Esophagus muscularis mucosa (tissue), 4 donors: ENCODE measurements at regions of chr17 and their contacts with region 1.

Region 1: GRCh38 chr17:28598799-28599310 is at the start of gene SPAG5:
- DNase-seq: peak; percentile 98
- H3K4me3 ChIP-seq: peak within 1 kb of the TSS; percentile 63 to 73 (median 66)
- H3K27ac ChIP-seq: peak within 1 kb of the TSS; percentile 94 to 95 (median 94)
- H3K4me1 ChIP-seq: peaks cover 13 to 20% (median 16%) of the 10 kb centered on the region in 4 donors
- H3K27me3 ChIP-seq: no peaks in the 10 kb centered on the region
- CTCF ChIP-seq: no peak
- EP300 ChIP-seq: no peak
- POLR2A ChIP-seq: peak; percentile 84
- total RNA-seq, gene SPAG5: 0.83 to 1.7 (median 0.97) TPM

Region 2: DNA sequence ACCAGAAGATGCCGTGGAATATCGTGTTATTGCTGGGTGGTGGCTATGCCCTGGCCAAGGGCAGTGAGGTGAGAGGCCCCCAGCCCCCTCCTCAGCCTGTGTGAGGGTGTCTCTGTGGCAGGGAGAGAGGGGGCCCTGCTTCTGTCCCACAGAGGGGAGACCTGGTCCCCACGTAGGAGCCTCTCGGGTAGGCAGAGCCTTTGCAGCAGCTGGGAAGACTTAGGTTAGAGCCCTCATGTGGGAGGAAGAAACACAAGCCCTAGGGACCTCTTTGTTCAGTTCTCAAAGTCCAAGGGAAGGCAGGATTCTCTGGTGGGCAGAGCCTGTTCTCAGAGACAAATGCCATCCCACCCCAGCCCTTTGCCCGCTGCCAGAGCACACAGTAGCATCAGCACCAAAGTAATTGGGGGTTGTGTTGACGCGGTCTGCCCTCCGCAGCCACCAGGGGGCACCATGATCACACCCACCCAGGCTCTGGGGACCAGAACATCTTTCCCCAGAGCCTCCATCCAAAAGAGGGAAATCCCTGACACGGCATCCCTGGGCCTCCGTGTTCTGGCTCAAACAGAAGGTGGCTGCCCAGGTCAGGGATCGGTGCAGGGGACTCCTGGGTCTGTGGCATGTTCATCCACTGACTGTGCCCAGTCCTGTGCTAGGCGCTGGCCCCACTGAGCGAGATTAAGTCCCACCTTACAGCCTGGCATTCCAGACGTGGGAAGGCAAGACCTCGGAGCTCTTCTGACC is 104.2 kb before region 1 on chr17:
- intact Hi-C with region 1: no loop called
- DNase-seq: peak; percentile 94
- H3K4me3 ChIP-seq: no peak overlapping the region
- H3K27ac ChIP-seq: no peak overlapping the region
- H3K4me1 ChIP-seq: no peaks in the 10 kb centered on the region
- H3K27me3 ChIP-seq: peaks cover 0 to 52% (median 2%) of the 10 kb centered on the region in 4 donors
- CTCF ChIP-seq: peak; percentile 76 to 87 (median 77)
- EP300 ChIP-seq: no peak
- POLR2A ChIP-seq: no peak

Region 3: DNA sequence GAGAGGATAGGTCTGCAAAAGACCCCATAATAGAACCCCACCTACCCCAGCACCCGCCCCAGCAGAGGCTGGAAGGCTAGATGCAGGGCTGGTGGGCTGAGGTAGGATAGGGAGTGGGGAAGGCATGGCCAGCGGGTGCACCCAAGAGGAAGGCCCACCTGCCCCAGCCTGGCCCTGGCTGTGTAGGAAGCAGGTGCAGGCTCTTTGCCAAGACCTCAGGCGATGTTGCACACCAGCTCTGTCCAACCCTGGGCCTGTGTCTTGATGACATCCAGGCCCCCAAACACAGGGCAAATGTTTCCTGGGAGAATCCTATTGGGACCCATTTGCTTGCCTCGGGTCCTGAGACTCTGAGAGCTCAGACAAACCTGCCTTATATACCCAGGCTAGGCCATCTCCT is 58.6 kb before region 1 on chr17:
- intact Hi-C with region 1: no loop called
- DNase-seq: no peak
- H3K4me3 ChIP-seq: no peak overlapping the region
- H3K27ac ChIP-seq: no peak overlapping the region
- H3K4me1 ChIP-seq: no peaks in the 10 kb centered on the region
- H3K27me3 ChIP-seq: no peaks in the 10 kb centered on the region
- CTCF ChIP-seq: no peak
- EP300 ChIP-seq: no peak
- POLR2A ChIP-seq: no peak

Region 4: DNA sequence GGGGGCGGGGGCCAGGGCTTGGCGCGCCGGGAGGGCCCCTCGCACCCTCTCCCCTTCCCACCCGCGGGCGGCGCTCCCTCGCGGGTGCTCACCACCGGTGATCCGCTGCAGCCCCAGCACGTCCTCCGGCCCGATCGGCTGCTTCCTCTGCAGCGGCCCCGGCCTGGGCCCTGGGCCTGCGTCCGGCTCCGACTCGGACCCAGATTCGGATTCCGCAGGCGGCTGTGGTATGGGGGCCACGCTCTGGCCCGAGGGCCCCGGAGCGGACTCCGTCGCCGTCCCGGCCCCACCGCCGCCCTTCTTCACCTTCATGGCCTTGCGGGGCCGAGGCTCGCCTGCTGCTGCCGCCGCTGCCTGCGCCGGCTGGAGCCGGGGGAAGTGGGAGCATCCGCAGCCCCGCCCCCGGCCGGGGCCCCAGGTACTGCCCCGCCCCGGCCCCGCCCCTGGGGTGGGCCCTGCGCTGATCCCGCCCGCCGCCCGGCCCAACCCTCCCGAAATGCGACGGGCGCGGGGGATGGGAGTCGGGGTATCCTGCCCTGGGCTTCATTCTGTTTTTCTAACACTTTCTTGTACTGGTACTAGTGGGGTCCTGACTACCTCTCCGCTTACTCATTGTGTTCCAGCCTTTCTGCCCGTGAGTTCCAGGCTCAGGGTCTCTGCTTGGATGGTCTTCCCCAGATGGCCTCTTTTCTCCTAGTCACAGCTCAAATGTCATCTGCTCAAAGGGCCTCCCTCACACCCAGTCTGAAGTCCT is 46.4 kb before region 1 on chr17 and contains the start of gene UNC119:
- intact Hi-C with region 1: loop called (anchors 5 kb)
- DNase-seq: no peak
- H3K4me3 ChIP-seq: peak within 1 kb of the TSS; percentile 77 to 91 (median 84)
- H3K27ac ChIP-seq: peak within 1 kb of the TSS; percentile 62 to 80 (median 78)
- H3K4me1 ChIP-seq: peaks cover 16 to 46% (median 35%) of the 10 kb centered on the region in 4 donors
- H3K27me3 ChIP-seq: no peaks in the 10 kb centered on the region
- CTCF ChIP-seq: no peak
- EP300 ChIP-seq: no peak
- POLR2A ChIP-seq: no peak
- total RNA-seq, gene UNC119: 16.1 to 36.3 (median 23.2) TPM